ENCODE measurements at regions of chr19 and their contacts with region 1.

Region 1: GRCh38 chr19:39846176-39846677 is at the start of gene FBL:
- DNase-seq: peak; percentile 94
- H3K4me3 Mint-ChIP-seq: peak within 1 kb of the TSS; percentile 90
- H3K27ac Mint-ChIP-seq: peak within 1 kb of the TSS; percentile 90
- H3K4me1 Mint-ChIP-seq: peaks cover 36% of the 10 kb centered on the region
- H3K27me3 Mint-ChIP-seq: no peaks in the 10 kb centered on the region
- CTCF ChIP-seq: no peak
- total RNA-seq, gene FBL: 355 and 502 TPM in 2 replicates

Region 2: GRCh38 chr19:39671738-39672363 is 174.4 kb before region 1 on chr19:
- CTCF ChIA-PET with region 1: interaction called, 35 read pairs
- POLR2A ChIA-PET with region 1: no interaction called
- intact Hi-C with region 1: loop called (anchors 2 kb)
- DNase-seq: peak; percentile 66
- H3K4me3 Mint-ChIP-seq: no peak overlapping the region
- H3K27ac Mint-ChIP-seq: no peak overlapping the region
- H3K4me1 Mint-ChIP-seq: peaks cover 6% of the 10 kb centered on the region
- H3K27me3 Mint-ChIP-seq: peaks cover 45% of the 10 kb centered on the region
- CTCF ChIP-seq: peak; percentile 43

Region 3: DNA sequence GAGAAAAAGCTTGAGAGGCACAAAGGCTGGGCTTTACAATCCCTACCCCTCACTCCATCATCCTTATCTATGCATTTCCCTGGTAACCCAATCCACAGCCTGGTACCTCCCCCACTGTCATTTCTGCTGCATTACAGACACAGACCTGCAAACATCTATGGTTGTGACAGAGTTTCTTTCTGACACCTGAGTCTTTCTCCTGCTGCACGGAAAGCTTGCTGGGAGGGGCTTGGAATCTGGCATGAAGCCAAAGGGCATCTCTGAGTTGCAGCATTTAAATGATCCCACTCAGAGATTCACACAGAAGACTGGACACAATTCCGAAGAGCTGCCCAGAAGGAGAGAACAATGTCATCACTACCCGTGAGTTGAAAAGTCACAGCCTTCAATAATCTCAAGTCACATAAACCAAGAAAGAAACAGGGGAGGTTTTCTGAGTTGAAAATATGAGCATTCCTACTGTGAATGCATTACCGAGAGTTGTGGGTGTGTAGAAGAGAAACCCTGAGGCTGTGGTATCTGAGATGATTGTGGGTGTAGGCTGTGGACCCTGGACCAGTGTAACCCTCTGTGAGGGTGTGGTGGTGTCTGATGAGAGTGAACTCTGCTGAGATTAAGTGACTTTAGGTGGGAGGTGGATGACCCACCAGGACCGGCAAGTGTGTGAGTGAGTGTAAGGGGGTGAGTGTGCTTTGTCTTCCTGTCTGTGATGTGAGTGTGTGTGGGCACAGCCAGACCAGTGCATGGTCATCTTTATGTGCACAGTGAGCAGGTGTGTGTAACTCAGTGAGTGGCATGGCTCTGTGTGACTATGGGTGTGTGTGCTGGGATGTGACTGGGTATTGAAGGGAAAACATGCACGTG is 141.8 kb before region 1 on chr19 and contains the start of gene LGALS14:
- CTCF ChIA-PET with region 1: no interaction called
- POLR2A ChIA-PET with region 1: no interaction called
- intact Hi-C with region 1: no loop called
- DNase-seq: no peak
- H3K4me3 Mint-ChIP-seq: no peak within 1 kb of the TSS
- H3K27ac Mint-ChIP-seq: no peak within 1 kb of the TSS
- H3K4me1 Mint-ChIP-seq: no peaks in the 10 kb centered on the region
- H3K27me3 Mint-ChIP-seq: peaks cover 53% of the 10 kb centered on the region
- CTCF ChIP-seq: no peak
- total RNA-seq, gene LGALS14: not detected in 2 replicates

Region 4: DNA sequence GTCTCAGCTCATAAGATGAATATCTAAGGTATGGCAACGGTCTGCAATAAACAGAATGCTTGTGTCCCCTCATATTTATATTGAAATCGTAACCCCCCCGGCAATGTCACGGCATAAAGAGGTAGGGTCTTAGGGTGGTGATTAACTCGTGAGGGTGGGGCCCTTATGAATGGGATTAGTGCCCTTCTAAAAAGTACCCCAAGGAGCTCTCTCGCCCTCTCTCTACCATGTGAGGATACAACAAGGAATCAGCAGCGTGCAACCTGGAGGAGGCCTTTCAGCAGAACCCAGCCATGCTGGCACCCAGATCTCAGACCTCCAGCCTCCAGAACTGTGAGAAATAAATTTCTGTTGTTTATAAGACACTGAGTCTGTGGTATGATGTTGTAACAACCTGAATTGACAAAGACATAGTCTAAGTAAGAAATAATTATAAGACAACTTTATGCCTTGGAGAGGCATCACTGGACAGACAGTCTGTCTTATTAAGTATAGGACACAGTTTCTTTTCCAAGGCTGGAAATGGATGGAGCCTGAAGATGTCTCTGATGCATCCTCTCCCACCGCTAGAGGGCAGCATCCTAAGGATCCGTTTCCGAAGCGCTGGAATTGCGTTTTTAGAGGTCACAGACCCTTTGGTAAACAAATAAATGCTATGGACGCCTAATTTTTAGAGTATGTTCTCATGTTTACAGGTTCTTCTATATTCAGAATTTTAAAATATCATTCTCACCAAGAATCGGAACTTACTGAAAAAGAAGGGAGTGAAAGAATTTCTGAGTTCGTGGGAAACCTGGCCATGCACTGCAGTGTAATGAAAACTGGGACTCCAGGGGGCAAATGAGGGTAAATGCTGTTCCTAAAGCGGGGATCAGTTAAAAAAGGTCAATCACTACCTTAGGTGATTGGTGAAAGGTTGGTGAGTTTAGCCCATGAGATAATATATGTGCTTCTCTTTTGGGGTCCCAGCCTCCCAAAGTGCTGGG is 80.8 kb before region 1 on chr19:
- CTCF ChIA-PET with region 1: interaction called, 6 read pairs
- POLR2A ChIA-PET with region 1: no interaction called
- intact Hi-C with region 1: loop called (anchors 5 kb)
- DNase-seq: peak; percentile 66
- H3K4me3 Mint-ChIP-seq: no peak overlapping the region
- H3K27ac Mint-ChIP-seq: no peak overlapping the region
- H3K4me1 Mint-ChIP-seq: no peaks in the 10 kb centered on the region
- H3K27me3 Mint-ChIP-seq: peaks cover 24% of the 10 kb centered on the region
- CTCF ChIP-seq: peak; percentile 75

Region 5: GRCh38 chr19:39792999-39793546 is 53.2 kb before region 1 on chr19:
- CTCF ChIA-PET with region 1: interaction called, 9 read pairs
- POLR2A ChIA-PET with region 1: interaction called, 3 read pairs
- intact Hi-C with region 1: loop called (anchors 1 kb)
- DNase-seq: peak; percentile 81
- H3K4me3 Mint-ChIP-seq: peak overlapping the region; percentile 29
- H3K27ac Mint-ChIP-seq: no peak overlapping the region
- H3K4me1 Mint-ChIP-seq: no peaks in the 10 kb centered on the region
- H3K27me3 Mint-ChIP-seq: peaks cover 36% of the 10 kb centered on the region
- CTCF ChIP-seq: peak; percentile 92

Region 6: GRCh38 chr19:39833464-39834286 is 12.6 kb before region 1 on chr19 and contains the start of gene DYRK1B:
- CTCF ChIA-PET with region 1: interaction called, 9 read pairs
- POLR2A ChIA-PET with region 1: interaction called, 11 read pairs
- intact Hi-C with region 1: no loop called
- DNase-seq: peak; percentile 92
- H3K4me3 Mint-ChIP-seq: peak within 1 kb of the TSS; percentile 79
- H3K27ac Mint-ChIP-seq: peak within 1 kb of the TSS; percentile 96
- H3K4me1 Mint-ChIP-seq: peaks cover 21% of the 10 kb centered on the region
- H3K27me3 Mint-ChIP-seq: no peaks in the 10 kb centered on the region
- CTCF ChIP-seq: no peak
- total RNA-seq, gene DYRK1B: 11.8 and 14.3 TPM in 2 replicates

Region 7: GRCh38 chr19:39970675-39971379 is 124.6 kb after region 1 on chr19 and contains the start of gene PSMC4:
- CTCF ChIA-PET with region 1: interaction called, 67 read pairs
- POLR2A ChIA-PET with region 1: interaction called, 41 read pairs
- intact Hi-C with region 1: loop called (anchors 2 kb)
- DNase-seq: peak; percentile 99
- H3K4me3 Mint-ChIP-seq: peak within 1 kb of the TSS; percentile 93
- H3K27ac Mint-ChIP-seq: peak within 1 kb of the TSS; percentile 98
- H3K4me1 Mint-ChIP-seq: peaks cover 19% of the 10 kb centered on the region
- H3K27me3 Mint-ChIP-seq: no peaks in the 10 kb centered on the region
- CTCF ChIP-seq: peak; percentile 41
- total RNA-seq, gene PSMC4: 105 and 108 TPM in 2 replicates

Region 8: GRCh38 chr19:39996811-39997594 is 150.8 kb after region 1 on chr19 and contains the start of gene ZNF546:
- CTCF ChIA-PET with region 1: no interaction called
- POLR2A ChIA-PET with region 1: interaction called, 16 read pairs
- intact Hi-C with region 1: no loop called
- DNase-seq: peak; percentile 91
- H3K4me3 Mint-ChIP-seq: peak within 1 kb of the TSS; percentile 91
- H3K27ac Mint-ChIP-seq: peak within 1 kb of the TSS; percentile 93
- H3K4me1 Mint-ChIP-seq: peaks cover 22% of the 10 kb centered on the region
- H3K27me3 Mint-ChIP-seq: no peaks in the 10 kb centered on the region
- CTCF ChIP-seq: no peak
- total RNA-seq, gene ZNF546: 5.2 and 6.3 TPM in 2 replicates